Naive thymus-derived CD4-positive, alpha-beta T cell (primary cell): ENCODE measurements at regions of chr12 and their contacts with region 1.

Region 1: GRCh38 chr12:54251667-54252284 is 28.1 kb downstream of the CBX5 start:
- DNase-seq: peak in 7 of 9 donors; percentile 9 to 54 (median 47)
- ATAC-seq: peak; percentile 75
- H3K4me3 ChIP-seq: no peak overlapping the region
- H3K4me3 Mint-ChIP-seq: peak overlapping the region in 1 of 10 donors; percentile 18
- H3K27ac ChIP-seq: no peak overlapping the region
- H3K27ac Mint-ChIP-seq: peak overlapping the region in 2 of 9 donors; percentile 48 to 76
- H3K4me1 ChIP-seq: no peaks in the 10 kb centered on the region
- H3K4me1 Mint-ChIP-seq: peaks cover 7 to 23% (median 17%) of the 10 kb centered on the region in 7 donors
- H3K27me3 ChIP-seq: no peaks in the 10 kb centered on the region
- H3K27me3 Mint-ChIP-seq: no peaks in the 10 kb centered on the region

Region 2: GRCh38 chr12:54220092-54220557 is 31.7 kb before region 1 on chr12:
- CTCF ChIA-PET with region 1: no interaction called
- POLR2A ChIA-PET with region 1: no interaction called
- intact Hi-C with region 1: no loop called
- DNase-seq: peak; percentile 37 to 65 (median 58)
- ATAC-seq: peak; percentile 74
- H3K4me3 ChIP-seq: no peak overlapping the region
- H3K4me3 Mint-ChIP-seq: peak overlapping the region in 2 of 10 donors; percentile 12 to 31
- H3K27ac ChIP-seq: no peak overlapping the region
- H3K27ac Mint-ChIP-seq: no peak overlapping the region
- H3K4me1 ChIP-seq: peaks cover 23 to 25% of the 10 kb centered on the region in 2 donors
- H3K4me1 Mint-ChIP-seq: peaks cover 18 to 42% (median 28%) of the 10 kb centered on the region in 7 donors
- H3K27me3 ChIP-seq: no peaks in the 10 kb centered on the region
- H3K27me3 Mint-ChIP-seq: peaks cover 0 to 19% (median 4%) of the 10 kb centered on the region in 5 donors

Region 3: GRCh38 chr12:54240971-54241588 is 10.7 kb before region 1 on chr12:
- CTCF ChIA-PET with region 1: interaction called, 5 read pairs
- POLR2A ChIA-PET with region 1: interaction called, 13 read pairs
- intact Hi-C with region 1: no loop called
- DNase-seq: no peak
- ATAC-seq: no peak
- H3K4me3 ChIP-seq: no peak overlapping the region
- H3K4me3 Mint-ChIP-seq: peak overlapping the region in 1 of 10 donors; percentile 36
- H3K27ac ChIP-seq: no peak overlapping the region
- H3K27ac Mint-ChIP-seq: peak overlapping the region in 1 of 9 donors; percentile 88
- H3K4me1 ChIP-seq: no peaks in the 10 kb centered on the region
- H3K4me1 Mint-ChIP-seq: peaks cover 0 to 29% (median 0%) of the 10 kb centered on the region in 7 donors
- H3K27me3 ChIP-seq: no peaks in the 10 kb centered on the region
- H3K27me3 Mint-ChIP-seq: no peaks in the 10 kb centered on the region